CD8-positive, alpha-beta memory T cell (primary cell): ENCODE measurements at regions of chr1 and their contacts with region 1.

Region 1: GRCh38 chr1:109493805-109494539 is at the start of gene CYB561D1:
- DNase-seq: peak; percentile 85 to 92 (median 88)
- H3K4me3 ChIP-seq: peak within 1 kb of the TSS; percentile 87
- H3K4me3 Mint-ChIP-seq: peak within 1 kb of the TSS; percentile 92 to 98 (median 95)
- H3K27ac ChIP-seq: peak within 1 kb of the TSS; percentile 51
- H3K27ac Mint-ChIP-seq: peak within 1 kb of the TSS; percentile 80 to 97 (median 90)
- H3K4me1 ChIP-seq: peaks cover 54% of the 10 kb centered on the region
- H3K4me1 Mint-ChIP-seq: peaks cover 41 to 61% (median 52%) of the 10 kb centered on the region in 3 donors
- H3K27me3 ChIP-seq: no peaks in the 10 kb centered on the region
- H3K27me3 Mint-ChIP-seq: no peaks in the 10 kb centered on the region
- total RNA-seq, gene CYB561D1: 9.9 to 10.6 TPM

Region 2: DNA sequence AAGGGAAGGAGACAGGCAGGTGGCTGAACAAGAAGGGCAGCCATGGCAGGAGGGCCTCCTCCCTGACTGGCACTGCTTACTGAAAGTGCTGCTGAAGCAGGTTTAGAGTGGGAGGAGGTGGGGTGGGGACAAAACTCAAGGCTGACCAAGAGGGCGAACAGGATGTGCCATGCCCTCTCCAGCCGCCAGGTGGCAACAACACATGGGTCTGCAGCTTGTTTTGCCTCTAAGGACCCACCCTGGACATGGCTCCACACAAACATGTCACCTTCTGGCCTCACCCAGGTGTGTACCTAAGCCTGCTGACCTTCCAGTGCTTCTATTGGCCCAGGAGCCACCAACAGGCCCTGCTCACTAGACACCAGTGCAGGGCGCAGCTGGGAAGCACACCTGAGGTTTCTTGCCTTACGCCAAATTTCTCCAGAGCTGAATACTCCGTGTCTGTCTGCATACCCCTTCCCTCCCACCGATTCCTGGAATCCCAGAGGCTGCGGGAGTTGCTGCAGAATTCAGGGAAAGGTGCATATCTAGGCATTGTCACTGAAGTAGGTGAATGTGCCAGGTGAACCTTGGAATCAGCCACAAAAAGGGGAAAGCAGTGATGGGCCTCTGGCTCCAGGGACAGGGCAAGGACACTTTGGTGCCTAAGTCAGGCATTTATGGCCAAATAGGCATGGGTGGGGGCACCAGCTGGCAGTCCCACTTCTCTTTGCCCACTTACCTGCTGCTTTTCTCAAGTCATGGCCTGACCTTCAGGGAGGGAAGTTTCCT is 216.4 kb before region 1 on chr1:
- CTCF ChIA-PET with region 1: interaction called, 12 read pairs
- POLR2A ChIA-PET with region 1: no interaction called
- DNase-seq: peak; percentile 37 to 67 (median 49)
- H3K4me3 ChIP-seq: no peak overlapping the region
- H3K4me3 Mint-ChIP-seq: no peak overlapping the region
- H3K27ac ChIP-seq: no peak overlapping the region
- H3K27ac Mint-ChIP-seq: peak overlapping the region in 2 of 8 donors; percentile 15 to 87
- H3K4me1 ChIP-seq: peaks cover 8% of the 10 kb centered on the region
- H3K4me1 Mint-ChIP-seq: peaks cover 5 to 12% (median 7%) of the 10 kb centered on the region in 3 donors
- H3K27me3 ChIP-seq: no peaks in the 10 kb centered on the region
- H3K27me3 Mint-ChIP-seq: no peaks in the 10 kb centered on the region

Region 3: GRCh38 chr1:109426278-109427170 is 67.4 kb before region 1 on chr1 and contains the start of gene PSMA5:
- CTCF ChIA-PET with region 1: interaction called, 15 read pairs
- POLR2A ChIA-PET with region 1: interaction called, 3 read pairs
- DNase-seq: peak; percentile 89 to 98 (median 94)
- H3K4me3 ChIP-seq: peak within 1 kb of the TSS; percentile 85
- H3K4me3 Mint-ChIP-seq: peak within 1 kb of the TSS; percentile 96 to 99 (median 98)
- H3K27ac ChIP-seq: peak within 1 kb of the TSS; percentile 94
- H3K27ac Mint-ChIP-seq: peak within 1 kb of the TSS; percentile 96 to 100 (median 99)
- H3K4me1 ChIP-seq: peaks cover 45% of the 10 kb centered on the region
- H3K4me1 Mint-ChIP-seq: peaks cover 35 to 47% (median 47%) of the 10 kb centered on the region in 3 donors
- H3K27me3 ChIP-seq: no peaks in the 10 kb centered on the region
- H3K27me3 Mint-ChIP-seq: no peaks in the 10 kb centered on the region
- total RNA-seq, gene PSMA5: 207 to 238 TPM

Region 4: DNA sequence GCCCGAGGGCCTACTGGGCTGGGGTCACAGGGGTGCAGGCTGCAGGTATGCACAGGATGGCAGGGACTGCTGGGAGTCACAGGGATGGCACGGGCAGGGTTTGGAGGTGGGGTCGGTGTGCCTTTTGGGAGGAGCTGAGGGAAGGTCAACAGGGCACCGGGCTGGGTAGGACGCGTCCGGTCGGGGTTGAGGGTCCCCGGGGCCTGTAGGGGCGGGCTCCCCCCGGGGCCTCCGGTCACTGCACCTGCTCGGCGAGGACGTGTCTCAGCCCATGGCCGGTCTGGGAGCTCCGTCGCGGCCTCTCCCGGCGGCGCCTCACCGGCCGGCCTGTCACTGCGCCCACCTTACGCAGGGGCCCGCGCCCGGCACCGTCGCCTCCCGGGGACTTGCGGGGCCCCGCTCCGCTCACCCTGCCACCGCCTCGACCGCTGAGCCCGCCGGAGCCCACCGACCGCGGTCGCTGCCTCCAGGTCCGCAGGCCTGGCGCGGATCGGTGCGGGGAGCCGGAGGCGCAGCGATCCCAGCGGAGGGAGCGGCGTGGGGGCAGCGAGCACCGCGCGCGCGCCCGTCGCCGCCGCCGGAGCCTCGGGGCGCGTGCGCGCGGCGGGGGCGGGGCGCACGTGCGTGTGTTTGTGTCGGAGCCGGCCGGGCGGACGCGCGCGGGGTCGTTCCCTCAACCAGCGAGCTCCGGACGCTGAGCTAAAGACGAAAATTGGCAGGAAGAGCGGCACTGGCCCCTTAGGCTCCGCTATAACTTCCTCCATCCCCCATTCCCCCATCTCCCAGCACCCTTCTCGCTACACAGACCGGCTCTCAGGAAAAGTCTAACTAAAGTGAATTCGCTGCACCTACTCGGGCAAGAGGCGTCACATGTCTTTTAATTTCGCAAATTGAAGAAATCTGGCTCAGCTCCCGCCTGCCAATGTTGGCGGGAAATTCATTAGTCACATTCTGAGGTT is 15.5 kb after region 1 on chr1 and contains the start of gene AMIGO1:
- CTCF ChIA-PET with region 1: interaction called, 384 read pairs
- POLR2A ChIA-PET with region 1: interaction called, 4 read pairs
- DNase-seq: peak; percentile 47 to 77 (median 63)
- H3K4me3 ChIP-seq: peak within 1 kb of the TSS; percentile 78
- H3K4me3 Mint-ChIP-seq: peak within 1 kb of the TSS; percentile 95 to 97 (median 95)
- H3K27ac ChIP-seq: no peak within 1 kb of the TSS
- H3K27ac Mint-ChIP-seq: peak within 1 kb of the TSS; percentile 71 to 99 (median 94)
- H3K4me1 ChIP-seq: peaks cover 56% of the 10 kb centered on the region
- H3K4me1 Mint-ChIP-seq: peaks cover 53 to 62% (median 60%) of the 10 kb centered on the region in 3 donors
- H3K27me3 ChIP-seq: no peaks in the 10 kb centered on the region
- H3K27me3 Mint-ChIP-seq: peaks cover 0 to 8% of the 10 kb centered on the region in 2 donors
- total RNA-seq, gene AMIGO1: 4.0 to 4.9 TPM

Region 5: DNA sequence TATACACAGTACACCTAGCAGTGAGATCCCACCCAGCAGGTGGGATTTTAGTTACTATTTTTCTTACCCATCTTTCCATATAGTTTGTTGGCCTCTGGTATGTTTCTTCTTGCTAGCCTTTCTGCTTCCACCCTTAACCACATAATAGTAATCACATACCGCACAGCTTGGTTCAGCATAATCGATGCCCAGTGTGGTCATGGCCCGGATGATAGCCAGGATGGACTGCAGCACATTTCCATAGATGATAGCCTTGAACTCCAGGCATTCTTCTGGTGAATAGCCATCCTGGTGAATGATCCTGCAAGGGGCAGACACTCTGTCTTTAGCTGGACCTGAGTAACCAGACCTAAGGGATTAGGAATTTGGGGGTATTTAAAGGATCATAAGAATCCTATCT is 115.9 kb after region 1 on chr1:
- CTCF ChIA-PET with region 1: no interaction called
- POLR2A ChIA-PET with region 1: no interaction called
- DNase-seq: no peak
- H3K4me3 ChIP-seq: no peak overlapping the region
- H3K4me3 Mint-ChIP-seq: no peak overlapping the region
- H3K27ac ChIP-seq: no peak overlapping the region
- H3K27ac Mint-ChIP-seq: peak overlapping the region in 1 of 8 donors; percentile 9
- H3K4me1 ChIP-seq: no peaks in the 10 kb centered on the region
- H3K4me1 Mint-ChIP-seq: no peaks in the 10 kb centered on the region
- H3K27me3 ChIP-seq: no peaks in the 10 kb centered on the region
- H3K27me3 Mint-ChIP-seq: peaks cover 0 to 2% of the 10 kb centered on the region in 2 donors

Region 6: GRCh38 chr1:109655601-109656519 is 161.9 kb after region 1 on chr1 and contains the start of gene GSTM4:
- CTCF ChIA-PET with region 1: no interaction called
- POLR2A ChIA-PET with region 1: no interaction called
- DNase-seq: peak; percentile 36 to 65 (median 48)
- H3K4me3 ChIP-seq: peak within 1 kb of the TSS; percentile 72
- H3K4me3 Mint-ChIP-seq: peak within 1 kb of the TSS; percentile 87 to 97 (median 93)
- H3K27ac ChIP-seq: peak within 1 kb of the TSS; percentile 61
- H3K27ac Mint-ChIP-seq: peak within 1 kb of the TSS; percentile 38 to 94 (median 90)
- H3K4me1 ChIP-seq: peaks cover 8% of the 10 kb centered on the region
- H3K4me1 Mint-ChIP-seq: peaks cover 12 to 18% (median 14%) of the 10 kb centered on the region in 3 donors
- H3K27me3 ChIP-seq: no peaks in the 10 kb centered on the region
- H3K27me3 Mint-ChIP-seq: peaks cover 9 to 20% of the 10 kb centered on the region in 2 donors
- total RNA-seq, gene GSTM4: 1.6 to 2.7 TPM